ENCODE measurements at regions of chr14 and their contacts with region 1.

Region 1: DNA sequence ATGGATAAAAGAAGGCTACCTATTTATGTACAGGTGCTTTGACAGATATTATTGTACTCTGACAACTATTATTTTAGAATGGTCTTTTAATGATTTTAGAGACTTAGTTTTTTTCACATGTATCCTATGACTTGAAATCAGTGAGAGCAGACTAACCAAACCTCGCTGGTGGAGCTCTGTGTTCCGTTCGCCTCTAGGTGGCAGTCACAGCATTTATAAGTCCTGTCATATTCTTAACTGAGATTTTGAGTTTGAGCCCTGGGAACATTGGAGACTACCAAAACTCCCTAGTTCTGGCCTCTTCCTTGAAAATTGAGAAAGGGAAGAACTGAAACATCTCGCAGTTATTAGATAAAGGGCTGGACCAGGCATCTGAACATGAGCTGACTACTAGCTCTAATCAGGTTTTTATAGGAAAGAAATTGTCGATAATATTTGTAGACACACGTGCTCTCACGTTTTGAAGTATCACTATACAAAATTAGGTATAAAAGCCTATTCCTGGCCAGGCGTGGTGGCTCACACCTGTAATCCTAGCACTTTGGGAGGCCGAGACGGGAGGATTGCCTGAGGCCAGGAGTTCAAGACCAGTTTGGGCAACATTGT is 48.3 kb downstream of the TTLL5 start:
- DNase-seq: peak; percentile 52
- H3K4me3 ChIP-seq: no peak overlapping the region; a peak in 1 of 4 replicates
- H3K27ac ChIP-seq: no peak overlapping the region
- H3K4me1 ChIP-seq: peaks cover 6 to 11% of the 10 kb centered on the region in 2 experiments; a peak in 3 of 4 replicates
- H3K27me3 ChIP-seq: no peaks in the 10 kb centered on the region
- CTCF ChIP-seq: peak; percentile 90
- EP300 ChIP-seq: no peak
- RAD21 ChIP-seq: peak; percentile 85

Region 2: GRCh38 chr14:75697386-75697785 is 11.9 kb before region 1 on chr14:
- CTCF ChIA-PET with region 1: interaction called, 24 read pairs
- POLR2A ChIA-PET with region 1: no interaction called
- DNase-seq: no peak
- H3K4me3 ChIP-seq: no peak overlapping the region
- H3K27ac ChIP-seq: no peak overlapping the region
- H3K4me1 ChIP-seq: no peaks in the 10 kb centered on the region; a peak in 1 of 4 replicates
- H3K27me3 ChIP-seq: no peaks in the 10 kb centered on the region
- CTCF ChIP-seq: no peak
- EP300 ChIP-seq: no peak
- RAD21 ChIP-seq: no peak

Region 3: DNA sequence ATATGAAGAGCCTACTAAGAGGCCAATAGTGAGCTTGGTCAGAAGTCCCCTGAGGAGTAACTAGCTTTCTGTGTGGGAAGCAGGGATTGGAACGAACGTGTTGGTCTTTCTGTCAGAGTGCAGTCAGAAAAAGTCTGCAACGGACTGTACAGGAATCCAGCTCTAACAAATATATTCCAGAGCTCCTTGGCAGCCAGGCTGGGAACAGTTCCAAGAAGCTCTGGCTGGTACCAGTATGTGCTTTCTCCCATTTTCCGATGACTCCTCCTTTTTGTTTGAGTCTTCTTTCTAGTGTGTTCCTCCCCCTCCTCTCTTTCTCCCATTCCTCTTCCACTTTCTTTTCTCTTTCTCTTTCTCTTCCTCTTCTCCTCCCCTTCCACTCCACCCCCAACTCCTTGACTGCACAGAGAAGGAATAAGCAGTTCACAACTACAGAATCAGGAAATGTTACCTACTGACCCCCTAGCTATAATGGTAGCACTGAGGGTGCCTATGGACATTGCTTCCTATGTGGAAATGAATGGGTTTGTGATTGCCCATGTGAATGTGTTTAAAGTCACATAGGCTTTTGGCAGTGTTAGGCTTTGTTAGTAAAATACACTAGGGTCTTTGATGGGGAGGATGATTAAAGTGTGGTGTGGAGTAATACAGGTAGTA is 11.7 kb after region 1 on chr14:
- CTCF ChIA-PET with region 1: interaction called, 14 read pairs
- POLR2A ChIA-PET with region 1: no interaction called
- DNase-seq: no peak
- H3K4me3 ChIP-seq: 0 out of 4 replicates have a peak overlapping the region, but pooled peaks of 1 of the 2 experiments have one; percentile 17
- H3K27ac ChIP-seq: peak overlapping the region; percentile 81; a peak in 3 of 4 replicates
- H3K4me1 ChIP-seq: peaks cover 0 to 14% of the 10 kb centered on the region in 2 experiments; a peak in 2 of 4 replicates
- H3K27me3 ChIP-seq: no peaks in the 10 kb centered on the region
- CTCF ChIP-seq: no peak
- EP300 ChIP-seq: no peak
- RAD21 ChIP-seq: no peak

Region 4: DNA sequence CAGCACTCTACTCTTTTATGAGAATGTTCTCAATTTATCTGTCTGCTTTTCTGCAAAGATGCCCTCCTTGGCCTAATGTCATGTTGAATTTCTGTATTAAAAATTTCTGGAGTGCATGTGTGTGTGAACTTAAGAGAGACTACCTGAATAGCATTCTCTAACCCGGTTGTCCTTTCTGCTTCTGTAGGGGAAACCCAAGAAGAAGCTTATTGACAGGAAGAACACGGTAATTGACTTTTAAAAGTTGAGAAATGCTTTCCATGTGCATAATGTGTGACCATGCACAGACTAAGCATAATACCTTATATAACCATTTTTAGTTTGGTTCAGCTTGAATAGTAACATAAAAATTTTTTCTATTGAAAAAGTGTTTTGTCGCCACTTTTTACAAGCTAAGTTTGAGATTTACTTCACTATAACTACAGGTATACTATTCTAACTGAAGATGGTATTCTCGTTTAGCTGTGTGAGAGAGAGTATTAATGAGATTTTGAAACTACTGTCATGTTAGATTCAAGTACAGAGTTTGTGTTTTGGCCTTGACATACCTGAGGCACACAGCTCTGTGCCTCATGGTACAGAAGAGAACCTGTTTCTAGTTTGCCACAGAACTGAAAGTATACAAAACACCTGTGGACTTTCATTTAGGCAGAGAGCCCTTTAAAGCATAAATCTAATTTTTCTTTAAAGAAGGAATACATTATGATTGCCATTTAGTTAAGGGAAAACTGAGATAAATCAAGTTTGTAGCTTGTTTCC is 48.5 kb after region 1 on chr14:
- CTCF ChIA-PET with region 1: interaction called, 14 read pairs
- POLR2A ChIA-PET with region 1: no interaction called
- DNase-seq: no peak
- H3K4me3 ChIP-seq: no peak overlapping the region
- H3K27ac ChIP-seq: no peak overlapping the region
- H3K4me1 ChIP-seq: no peaks in the 10 kb centered on the region; a peak in 1 of 4 replicates
- H3K27me3 ChIP-seq: no peaks in the 10 kb centered on the region
- CTCF ChIP-seq: no peak
- EP300 ChIP-seq: no peak
- RAD21 ChIP-seq: no peak

Region 5: GRCh38 chr14:75915061-75915460 is 205.8 kb after region 1 on chr14:
- CTCF ChIA-PET with region 1: interaction called, 12 read pairs
- POLR2A ChIA-PET with region 1: no interaction called
- DNase-seq: no peak
- H3K4me3 ChIP-seq: no peak overlapping the region
- H3K27ac ChIP-seq: no peak overlapping the region
- H3K4me1 ChIP-seq: peaks cover 0 to 23% of the 10 kb centered on the region in 2 experiments; a peak in 2 of 4 replicates
- H3K27me3 ChIP-seq: no peaks in the 10 kb centered on the region
- CTCF ChIP-seq: no peak
- EP300 ChIP-seq: no peak
- RAD21 ChIP-seq: no peak

Region 6: DNA sequence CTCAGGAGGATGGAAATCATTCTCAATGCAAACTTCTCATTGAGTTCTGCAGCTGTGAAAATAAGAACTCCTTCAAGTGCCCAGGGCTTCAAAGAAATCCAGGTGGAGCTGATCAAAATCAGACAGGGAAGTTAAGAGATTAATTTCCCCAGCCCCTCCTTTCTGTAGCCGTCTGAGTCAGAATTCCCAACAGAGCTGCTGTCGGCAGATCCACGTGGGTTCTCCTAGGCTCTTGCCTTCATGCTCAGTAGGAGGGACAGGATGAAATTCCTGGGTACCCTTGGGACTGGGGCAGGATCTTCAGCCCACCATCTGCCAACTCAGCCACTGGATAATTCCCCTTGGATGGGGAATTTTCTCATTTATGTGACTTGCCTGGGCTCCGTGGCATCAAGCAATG is 259.1 kb after region 1 on chr14:
- CTCF ChIA-PET with region 1: interaction called, 12 read pairs
- POLR2A ChIA-PET with region 1: no interaction called
- DNase-seq: no peak
- H3K4me3 ChIP-seq: no peak overlapping the region
- H3K27ac ChIP-seq: no peak overlapping the region
- H3K4me1 ChIP-seq: peaks cover 0 to 29% of the 10 kb centered on the region in 2 experiments; a peak in 2 of 4 replicates
- H3K27me3 ChIP-seq: no peaks in the 10 kb centered on the region
- CTCF ChIP-seq: no peak
- EP300 ChIP-seq: no peak
- RAD21 ChIP-seq: no peak

Region 7: GRCh38 chr14:75989134-75989533 is 279.8 kb after region 1 on chr14:
- CTCF ChIA-PET with region 1: interaction called, 270 read pairs
- POLR2A ChIA-PET with region 1: no interaction called
- DNase-seq: no peak
- H3K4me3 ChIP-seq: no peak overlapping the region
- H3K27ac ChIP-seq: no peak overlapping the region
- H3K4me1 ChIP-seq: peaks cover 4 to 23% of the 10 kb centered on the region in 2 experiments; a peak in 3 of 4 replicates
- H3K27me3 ChIP-seq: no peaks in the 10 kb centered on the region
- CTCF ChIP-seq: no peak
- EP300 ChIP-seq: no peak
- RAD21 ChIP-seq: no peak

Region 8: DNA sequence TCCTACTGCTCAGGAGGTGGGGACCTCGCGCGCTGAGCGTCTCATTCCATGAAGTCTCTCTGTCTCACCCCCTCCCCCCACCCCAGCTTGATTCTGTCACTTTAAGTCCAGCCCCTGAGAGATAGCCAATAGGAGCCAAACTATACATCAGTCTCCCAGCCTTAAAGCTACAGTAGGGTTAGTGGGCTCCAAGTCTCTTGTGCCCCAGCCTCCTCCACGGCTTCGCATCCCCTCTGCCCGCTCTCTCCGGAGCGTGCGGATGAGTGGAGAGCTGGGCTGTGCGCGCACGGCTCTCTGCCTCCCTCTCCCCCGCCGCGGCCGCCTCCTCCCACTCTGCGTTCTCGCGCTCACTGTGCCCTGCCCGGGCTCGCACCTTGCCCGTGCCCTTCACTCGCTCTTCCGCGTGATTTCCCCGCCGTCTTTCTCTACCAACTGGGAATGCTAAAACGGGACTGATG is 666.7 kb after region 1 on chr14 and contains the start of gene ESRRB:
- CTCF ChIA-PET with region 1: no interaction called
- POLR2A ChIA-PET with region 1: no interaction called
- DNase-seq: peak; percentile 54
- H3K4me3 ChIP-seq: peak within 1 kb of the TSS; percentile 42 to 55
- H3K27ac ChIP-seq: no peak within 1 kb of the TSS
- H3K4me1 ChIP-seq: peaks cover 3 to 7% of the 10 kb centered on the region in 2 experiments; a peak in 2 of 4 replicates
- H3K27me3 ChIP-seq: peaks cover 85% of the 10 kb centered on the region
- CTCF ChIP-seq: no peak
- EP300 ChIP-seq: no peak
- RAD21 ChIP-seq: no peak
- polyA plus RNA-seq, gene ESRRB: 0.05 and 0.06 TPM in 2 replicates

Measured in SK-N-SH (cell line).